Activated CD8-positive, alpha-beta T cell treated with anti-CD3 and anti-CD28 coated beads for 36 hours (primary cell): ENCODE measurements at regions of chr3 and their contacts with region 1.

Region 1: DNA sequence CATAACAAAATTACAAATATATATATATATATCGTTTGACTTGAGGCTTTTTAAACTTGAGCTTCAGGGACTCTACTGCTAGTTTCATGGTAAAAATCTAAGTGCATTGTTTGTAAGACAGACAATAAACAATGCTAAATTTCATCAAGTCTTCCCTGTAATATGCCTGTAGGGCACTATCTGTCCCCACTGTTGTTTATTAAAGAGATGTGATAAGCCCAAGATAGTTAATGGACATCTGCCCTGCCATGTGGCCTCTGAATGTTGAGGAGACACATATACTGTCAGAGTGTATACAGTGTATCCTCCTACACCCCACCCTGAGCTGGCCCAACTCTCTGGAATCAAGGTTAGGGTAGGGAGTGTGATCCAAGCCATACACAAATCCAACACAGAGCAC is 15.1 kb upstream of the EIF1B start:
- DNase-seq: no peak
- ATAC-seq: no peak
- H3K4me3 Mint-ChIP-seq: no peak overlapping the region
- H3K27ac Mint-ChIP-seq: no peak overlapping the region
- H3K4me1 Mint-ChIP-seq: peaks cover 2% of the 10 kb centered on the region
- H3K27me3 Mint-ChIP-seq: no peaks in the 10 kb centered on the region
- CTCF ChIP-seq: no peak

Region 2: GRCh38 chr3:40309418-40309924 is 15.0 kb after region 1 on chr3 and contains the start of gene EIF1B:
- CTCF ChIA-PET with region 1: interaction called, 24 read pairs
- POLR2A ChIA-PET with region 1: interaction called, 6 read pairs
- intact Hi-C with region 1: no loop called
- DNase-seq: peak; percentile 99
- ATAC-seq: peak; percentile 88
- H3K4me3 Mint-ChIP-seq: peak within 1 kb of the TSS; percentile 98
- H3K27ac Mint-ChIP-seq: peak within 1 kb of the TSS; percentile 97
- H3K4me1 Mint-ChIP-seq: peaks cover 24% of the 10 kb centered on the region
- H3K27me3 Mint-ChIP-seq: no peaks in the 10 kb centered on the region
- CTCF ChIP-seq: peak; percentile 73
- total RNA-seq, gene EIF1B: 38.2 to 42.3 TPM